Pancreas (tissue), 10 donors: ENCODE measurements at regions of chr19 and their contacts with region 1.

Region 1: GRCh38 chr19:38729653-38730469 is 14.4 kb downstream of the CAPN12 start:
- DNase-seq: peak; percentile 53 to 89 (median 76)
- ATAC-seq: peak in 3 of 4 donors; percentile 35 to 48 (median 45)
- H3K4me3 ChIP-seq: no peak overlapping the region
- H3K27ac ChIP-seq: peak overlapping the region in 1 of 4 donors; percentile 37
- H3K4me1 ChIP-seq: peaks cover 19 to 21% (median 20%) of the 10 kb centered on the region in 3 donors
- H3K27me3 ChIP-seq: no peaks in the 10 kb centered on the region
- CTCF ChIP-seq: peak; percentile 64 to 74 (median 69)

Region 2: DNA sequence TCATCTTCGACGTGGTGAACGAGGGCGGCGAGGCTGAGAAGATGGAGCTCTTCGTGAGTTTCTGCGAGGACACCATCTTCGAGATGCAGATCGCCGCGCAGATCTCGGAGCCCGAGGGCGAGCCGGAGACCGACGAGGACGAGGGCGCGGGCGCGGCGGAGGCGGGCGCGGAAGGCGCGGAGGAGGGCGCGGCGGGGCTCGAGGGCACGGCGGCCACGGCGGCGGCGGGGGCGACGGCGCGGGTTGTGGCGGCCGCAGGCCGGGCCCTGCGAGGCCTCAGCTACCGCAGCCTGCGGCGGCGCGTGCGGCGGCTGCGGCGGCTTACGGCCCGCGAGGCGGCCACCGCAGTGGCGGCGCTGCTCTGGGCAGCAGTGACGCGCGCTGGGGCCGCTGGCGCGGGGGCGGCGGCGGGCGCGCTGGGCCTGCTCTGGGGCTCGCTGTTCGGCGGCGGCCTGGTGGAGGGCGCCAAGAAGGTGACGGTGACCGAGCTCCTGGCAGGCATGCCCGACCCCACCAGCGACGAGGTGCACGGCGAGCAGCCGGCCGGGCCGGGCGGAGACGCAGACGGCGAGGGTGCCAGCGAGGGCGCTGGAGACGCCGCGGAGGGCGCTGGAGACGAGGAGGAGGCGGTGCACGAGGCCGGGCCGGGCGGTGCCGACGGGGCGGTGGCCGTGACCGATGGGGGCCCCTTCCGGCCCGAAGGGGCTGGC is 164.7 kb before region 1 on chr19:
- intact Hi-C with region 1: no loop called
- DNase-seq: no peak
- ATAC-seq: peak in 2 of 4 donors; percentile 26 to 28
- H3K4me3 ChIP-seq: peak overlapping the region in 1 of 4 donors; percentile 18
- H3K27ac ChIP-seq: no peak overlapping the region
- H3K4me1 ChIP-seq: no peaks in the 10 kb centered on the region
- H3K27me3 ChIP-seq: no peaks in the 10 kb centered on the region
- CTCF ChIP-seq: no peak

Region 3: GRCh38 chr19:38647368-38647965 is 82.4 kb before region 1 on chr19 and contains the start of gene ACTN4:
- intact Hi-C with region 1: loop called in 1 of 3 experiments (anchors 5 kb)
- DNase-seq: peak; percentile 97 to 100 (median 100)
- ATAC-seq: peak; percentile 84 to 92 (median 88)
- H3K4me3 ChIP-seq: peak within 1 kb of the TSS; percentile 72 to 85 (median 80)
- H3K27ac ChIP-seq: peak within 1 kb of the TSS; percentile 83 to 89 (median 88)
- H3K4me1 ChIP-seq: peaks cover 15 to 20% (median 20%) of the 10 kb centered on the region in 3 donors
- H3K27me3 ChIP-seq: no peaks in the 10 kb centered on the region
- CTCF ChIP-seq: no peak
- total RNA-seq, gene ACTN4: 137 to 284 (median 189) TPM

Region 4: DNA sequence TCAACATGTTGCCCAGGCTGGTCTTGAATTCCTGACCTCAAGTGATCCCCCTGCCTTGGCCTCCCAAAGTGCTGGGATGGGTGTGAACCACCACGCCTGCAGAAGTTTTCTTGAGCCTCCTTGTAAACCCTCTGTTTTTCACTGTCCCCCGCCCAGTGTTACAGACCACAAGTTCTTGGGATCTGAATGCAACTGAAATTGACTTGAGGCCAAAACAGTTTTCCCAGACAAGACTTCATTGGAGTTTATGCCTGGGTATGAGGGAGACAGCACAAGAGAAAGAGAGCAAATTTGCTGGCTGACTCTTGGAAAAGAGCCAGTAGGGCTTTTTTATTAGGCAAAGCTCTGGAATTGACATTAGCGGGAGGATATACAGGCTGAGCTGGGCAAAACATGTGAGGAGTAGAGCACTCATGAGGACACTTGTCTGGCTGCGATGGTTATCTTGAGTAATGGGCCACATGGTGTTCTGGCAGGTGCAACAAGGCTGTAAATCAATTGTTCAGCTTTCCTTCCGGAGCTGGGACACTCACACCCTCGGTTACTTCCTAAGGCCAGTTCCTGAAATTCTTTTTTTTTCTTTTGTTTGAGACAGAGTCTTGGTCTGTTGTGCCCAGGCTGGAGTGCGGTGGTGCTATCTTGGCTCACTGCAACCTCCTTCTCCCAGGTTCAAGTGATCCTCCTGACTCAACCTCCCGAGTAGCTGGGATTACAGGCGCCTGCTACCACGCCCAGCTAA is 132.6 kb after region 1 on chr19:
- intact Hi-C with region 1: no loop called
- DNase-seq: peak in 2 of 6 donors; percentile 64 to 69
- ATAC-seq: peak; percentile 77 to 89 (median 88)
- H3K4me3 ChIP-seq: no peak overlapping the region
- H3K27ac ChIP-seq: peak overlapping the region; percentile 2 to 82 (median 68)
- H3K4me1 ChIP-seq: peaks cover 4 to 19% (median 11%) of the 10 kb centered on the region in 3 donors
- H3K27me3 ChIP-seq: no peaks in the 10 kb centered on the region
- CTCF ChIP-seq: no peak

Region 5: GRCh38 chr19:38970664-38971532 is 241.0 kb after region 1 on chr19:
- intact Hi-C with region 1: no loop called
- DNase-seq: no peak
- ATAC-seq: no peak
- H3K4me3 ChIP-seq: no peak overlapping the region
- H3K27ac ChIP-seq: no peak overlapping the region
- H3K4me1 ChIP-seq: peaks cover 0 to 6% (median 0%) of the 10 kb centered on the region in 3 donors
- H3K27me3 ChIP-seq: no peaks in the 10 kb centered on the region
- CTCF ChIP-seq: no peak

Region 6: GRCh38 chr19:39078436-39079200 is 348.8 kb after region 1 on chr19:
- intact Hi-C with region 1: no loop called
- DNase-seq: no peak
- ATAC-seq: no peak
- H3K4me3 ChIP-seq: no peak overlapping the region
- H3K27ac ChIP-seq: no peak overlapping the region
- H3K4me1 ChIP-seq: no peaks in the 10 kb centered on the region
- H3K27me3 ChIP-seq: peaks cover 0 to 13% (median 0%) of the 10 kb centered on the region in 4 donors
- CTCF ChIP-seq: no peak